Activated CD4-positive, alpha-beta memory T cell treated with anti-CD3 and anti-CD28 coated beads, Interleukin-2, amount 10 ng/mL, durations not matched to agents 7 days and 5 days (primary cell): ENCODE measurements at regions of chr11 and their contacts with region 1.

Region 1: GRCh38 chr11:122754553-122755322 is 83.6 kb upstream of the CRTAM start:
- DNase-seq: peak; percentile 38
- H3K4me3 Mint-ChIP-seq: no peak overlapping the region
- H3K27ac Mint-ChIP-seq: no peak overlapping the region
- H3K4me1 Mint-ChIP-seq: peaks cover 49% of the 10 kb centered on the region
- H3K27me3 Mint-ChIP-seq: peaks cover 3% of the 10 kb centered on the region

Region 2: GRCh38 chr11:122628810-122629555 is 125.8 kb before region 1 on chr11:
- CTCF ChIA-PET with region 1: interaction called, 102 read pairs
- POLR2A ChIA-PET with region 1: interaction called, 8 read pairs
- DNase-seq: peak; percentile 67
- H3K4me3 Mint-ChIP-seq: no peak overlapping the region
- H3K27ac Mint-ChIP-seq: no peak overlapping the region
- H3K4me1 Mint-ChIP-seq: peaks cover 5% of the 10 kb centered on the region
- H3K27me3 Mint-ChIP-seq: peaks cover 9% of the 10 kb centered on the region

Region 3: GRCh38 chr11:122668562-122669090 is 86.1 kb before region 1 on chr11:
- CTCF ChIA-PET with region 1: interaction called, 36 read pairs
- POLR2A ChIA-PET with region 1: interaction called, 4 read pairs
- DNase-seq: no peak
- H3K4me3 Mint-ChIP-seq: no peak overlapping the region
- H3K27ac Mint-ChIP-seq: no peak overlapping the region
- H3K4me1 Mint-ChIP-seq: peaks cover 37% of the 10 kb centered on the region
- H3K27me3 Mint-ChIP-seq: peaks cover 2% of the 10 kb centered on the region

Region 4: DNA sequence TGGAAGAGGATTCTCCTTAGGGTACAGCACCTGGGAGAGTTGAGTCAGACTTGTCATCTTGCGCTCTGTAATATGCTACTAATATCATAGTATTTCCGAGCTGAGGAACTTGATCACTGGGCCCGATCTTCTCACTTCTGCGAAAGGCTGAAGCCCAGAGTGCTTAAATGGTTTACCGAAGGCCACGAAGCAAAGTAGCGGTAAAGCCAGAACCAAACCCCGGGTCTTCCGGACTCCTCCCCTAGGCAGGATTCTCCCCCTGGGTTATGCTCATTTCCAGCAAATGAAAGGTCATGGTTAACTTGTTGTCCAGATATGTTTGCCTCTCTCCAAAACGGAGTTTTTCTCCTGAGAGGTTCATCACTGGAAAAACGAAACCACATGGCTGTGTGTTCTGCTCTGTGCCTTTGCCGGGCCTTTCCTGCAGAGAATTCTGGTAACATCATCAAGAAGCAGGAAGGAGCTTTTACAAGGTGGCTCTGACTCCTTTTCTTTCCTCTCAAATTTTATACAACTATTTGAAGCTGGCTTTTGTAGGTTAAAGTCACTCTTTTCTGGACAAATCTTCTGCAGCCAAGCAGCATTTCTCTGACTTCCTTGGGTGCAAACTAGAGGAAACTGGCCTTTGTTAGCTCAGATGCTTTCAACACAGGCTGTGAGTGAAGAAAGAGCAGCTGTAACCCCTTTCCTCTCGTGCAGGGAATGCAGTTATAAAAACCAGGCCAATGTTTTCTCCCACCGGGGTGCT is 63.8 kb before region 1 on chr11:
- CTCF ChIA-PET with region 1: interaction called, 32 read pairs
- POLR2A ChIA-PET with region 1: interaction called, 25 read pairs
- DNase-seq: no peak
- H3K4me3 Mint-ChIP-seq: peak overlapping the region; percentile 64
- H3K27ac Mint-ChIP-seq: peak overlapping the region; percentile 80
- H3K4me1 Mint-ChIP-seq: peaks cover 46% of the 10 kb centered on the region
- H3K27me3 Mint-ChIP-seq: no peaks in the 10 kb centered on the region

Region 5: GRCh38 chr11:122727101-122727929 is 27.4 kb before region 1 on chr11:
- CTCF ChIA-PET with region 1: interaction called, 21 read pairs
- POLR2A ChIA-PET with region 1: interaction called, 66 read pairs
- DNase-seq: peak; percentile 59
- H3K4me3 Mint-ChIP-seq: peak overlapping the region; percentile 60
- H3K27ac Mint-ChIP-seq: peak overlapping the region; percentile 90
- H3K4me1 Mint-ChIP-seq: peaks cover 68% of the 10 kb centered on the region
- H3K27me3 Mint-ChIP-seq: no peaks in the 10 kb centered on the region

Region 6: DNA sequence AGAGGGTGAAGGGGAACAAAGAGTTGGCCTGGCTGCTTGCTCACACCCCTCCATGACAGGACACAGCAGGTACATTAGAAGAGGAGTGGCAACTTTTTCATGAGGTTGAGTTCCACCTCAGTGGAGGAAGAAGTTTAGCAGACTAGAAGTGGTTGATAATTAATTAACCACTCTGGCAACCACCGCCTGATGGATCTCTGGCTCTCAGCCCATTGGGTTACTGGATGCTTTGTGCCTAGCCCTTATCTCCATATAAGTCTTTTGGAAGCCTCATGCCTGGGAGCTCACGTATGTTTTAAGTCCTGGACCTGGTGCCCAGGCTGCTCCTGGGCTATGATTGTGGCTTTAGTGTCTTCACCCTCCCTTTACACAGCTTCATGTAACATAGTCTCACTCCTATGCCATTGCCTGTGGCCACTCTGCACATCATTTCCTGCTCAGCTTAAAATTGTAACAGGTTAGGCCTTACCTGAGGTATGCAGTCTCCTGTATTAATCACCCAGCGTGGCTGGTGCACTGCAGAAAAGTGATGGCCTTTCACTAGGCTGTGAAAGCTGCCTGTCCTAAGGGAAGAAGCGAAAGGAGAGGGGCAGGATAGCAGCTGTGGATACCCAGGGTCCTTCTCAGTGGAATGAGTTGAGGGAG is 10.9 kb after region 1 on chr11:
- CTCF ChIA-PET with region 1: interaction called, 16 read pairs
- POLR2A ChIA-PET with region 1: no interaction called
- DNase-seq: no peak
- H3K4me3 Mint-ChIP-seq: no peak overlapping the region
- H3K27ac Mint-ChIP-seq: no peak overlapping the region
- H3K4me1 Mint-ChIP-seq: peaks cover 13% of the 10 kb centered on the region
- H3K27me3 Mint-ChIP-seq: no peaks in the 10 kb centered on the region

Region 7: DNA sequence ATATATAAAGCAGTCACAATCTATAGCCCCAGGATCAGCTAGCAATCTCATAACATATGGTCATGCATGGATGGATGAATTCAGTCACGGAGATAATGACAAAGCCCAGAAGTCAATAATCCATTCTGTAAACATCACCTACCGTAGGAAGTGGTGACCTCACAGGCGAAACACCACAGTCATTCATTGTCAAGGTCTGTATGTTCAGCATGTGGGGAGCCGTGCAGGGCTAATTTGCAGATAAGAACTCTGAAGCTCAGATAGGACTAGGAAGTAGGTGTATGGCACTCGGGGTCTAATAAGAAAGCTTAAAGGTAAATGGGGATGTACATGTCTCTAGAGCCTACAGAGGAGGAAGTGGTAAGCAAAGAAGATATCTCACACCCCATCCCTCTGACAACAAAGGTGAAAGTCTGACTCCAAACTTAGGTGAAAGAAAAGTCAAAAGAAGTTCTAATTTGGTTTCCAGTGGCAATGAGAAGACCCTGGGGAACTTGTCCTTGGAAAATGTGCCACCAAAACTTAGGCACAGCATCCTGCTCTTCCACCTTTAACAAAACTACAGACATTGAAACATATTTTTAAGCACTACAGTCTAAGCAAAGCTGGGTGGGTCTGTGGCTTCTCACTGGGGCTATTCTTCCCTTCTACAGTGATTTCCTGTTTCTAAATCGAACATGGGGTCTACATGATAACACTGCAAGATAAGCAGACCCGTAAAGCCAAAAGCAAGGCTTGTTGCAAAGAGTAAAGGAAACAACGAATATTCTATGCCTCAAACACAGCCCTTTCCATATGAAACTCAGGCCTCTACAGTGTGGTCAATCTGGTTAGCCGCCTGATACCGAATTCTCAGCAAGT is 88.8 kb after region 1 on chr11:
- CTCF ChIA-PET with region 1: no interaction called
- POLR2A ChIA-PET with region 1: no interaction called
- DNase-seq: peak; percentile 34
- H3K4me3 Mint-ChIP-seq: no peak overlapping the region
- H3K27ac Mint-ChIP-seq: peak overlapping the region; percentile 62
- H3K4me1 Mint-ChIP-seq: peaks cover 20% of the 10 kb centered on the region
- H3K27me3 Mint-ChIP-seq: peaks cover 3% of the 10 kb centered on the region

Region 8: GRCh38 chr11:122853971-122854446 is 99.3 kb after region 1 on chr11:
- CTCF ChIA-PET with region 1: interaction called, 27 read pairs
- POLR2A ChIA-PET with region 1: no interaction called
- DNase-seq: peak; percentile 31
- H3K4me3 Mint-ChIP-seq: no peak overlapping the region
- H3K27ac Mint-ChIP-seq: no peak overlapping the region
- H3K4me1 Mint-ChIP-seq: peaks cover 31% of the 10 kb centered on the region
- H3K27me3 Mint-ChIP-seq: peaks cover 31% of the 10 kb centered on the region